IMR-90 (cell line): ENCODE measurements at regions of chr3 and their contacts with region 1.

Region 1: GRCh38 chr3:129627429-129628168 is 21.1 kb upstream of the PLXND1 start:
- DNase-seq: peak; percentile 75
- ATAC-seq: peak; percentile 29
- H3K4me3 ChIP-seq: peak overlapping the region; percentile 29
- H3K27ac ChIP-seq: peak overlapping the region; percentile 88
- H3K4me1 ChIP-seq: peaks cover 20% of the 10 kb centered on the region
- H3K27me3 ChIP-seq: no peaks in the 10 kb centered on the region
- CTCF ChIP-seq: peak; percentile 74
- POLR2A ChIP-seq: peak; percentile 46
- RAD21 ChIP-seq: peak; percentile 89

Region 2: GRCh38 chr3:129160891-129161859 is 466.4 kb before region 1 on chr3 and contains the start of gene ISY1:
- CTCF ChIA-PET with region 1: no interaction called
- POLR2A ChIA-PET with region 1: no interaction called
- dilution Hi-C with region 1: no loop called
- in situ Hi-C with region 1: no loop called
- intact Hi-C with region 1: no loop called
- DNase-seq: peak; percentile 97
- ATAC-seq: peak; percentile 87
- H3K4me3 ChIP-seq: peak within 1 kb of the TSS; percentile 67
- H3K27ac ChIP-seq: peak within 1 kb of the TSS; percentile 92
- H3K4me1 ChIP-seq: peaks cover 2% of the 10 kb centered on the region
- H3K27me3 ChIP-seq: no peaks in the 10 kb centered on the region
- CTCF ChIP-seq: peak; percentile 87
- POLR2A ChIP-seq: peak; percentile 95
- RAD21 ChIP-seq: peak; percentile 56
- total RNA-seq, gene ISY1: 28.5 and 39.7 TPM in 2 replicates

Region 3: DNA sequence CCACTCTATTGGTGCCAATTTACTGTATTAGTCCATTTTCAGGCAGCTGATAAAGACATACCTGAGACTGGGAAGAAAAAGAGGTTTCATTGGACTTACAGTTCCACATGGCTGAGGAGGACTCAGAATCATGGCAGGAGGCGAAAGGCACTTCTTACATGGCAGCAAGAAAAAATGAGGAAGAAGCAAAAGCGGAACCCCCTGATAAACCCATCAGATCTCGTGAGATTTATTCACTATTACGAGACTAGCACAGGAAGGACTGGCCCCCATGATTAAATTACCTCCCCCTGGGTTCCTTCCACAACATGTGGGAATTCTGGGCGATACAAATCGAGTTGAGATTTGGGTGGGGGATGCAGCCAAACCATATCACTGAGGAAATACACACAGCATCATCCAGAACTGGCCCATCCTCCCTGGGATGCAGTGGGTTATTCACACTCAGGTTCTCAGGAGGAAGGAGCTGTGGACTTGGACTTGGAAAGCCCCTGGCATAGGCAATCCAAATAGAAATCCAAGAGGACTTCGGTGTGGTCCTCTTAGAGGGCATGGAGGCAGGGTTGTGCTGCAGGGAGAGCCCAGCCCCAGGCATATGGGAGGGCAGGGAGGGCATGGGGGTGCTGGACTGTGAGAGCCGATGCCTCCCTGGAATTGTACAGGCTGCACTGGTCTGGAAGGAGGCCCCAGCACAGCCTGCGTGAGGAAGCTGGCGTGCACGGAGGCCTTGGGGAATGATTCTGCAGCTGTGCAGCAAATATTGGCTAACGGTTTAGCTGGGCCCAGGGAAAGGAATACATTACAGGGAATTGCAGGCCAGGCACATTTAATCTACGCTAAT is 262.1 kb before region 1 on chr3:
- CTCF ChIA-PET with region 1: no interaction called
- POLR2A ChIA-PET with region 1: no interaction called
- dilution Hi-C with region 1: no loop called
- in situ Hi-C with region 1: no loop called
- intact Hi-C with region 1: no loop called
- DNase-seq: no peak
- ATAC-seq: peak; percentile 29
- H3K4me3 ChIP-seq: no peak overlapping the region
- H3K27ac ChIP-seq: no peak overlapping the region
- H3K4me1 ChIP-seq: no peaks in the 10 kb centered on the region
- H3K27me3 ChIP-seq: peaks cover 19% of the 10 kb centered on the region
- CTCF ChIP-seq: no peak
- POLR2A ChIP-seq: no peak
- RAD21 ChIP-seq: no peak

Region 4: GRCh38 chr3:129934234-129935123 is 306.9 kb after region 1 on chr3:
- CTCF ChIA-PET with region 1: no interaction called
- POLR2A ChIA-PET with region 1: no interaction called
- dilution Hi-C with region 1: no loop called
- in situ Hi-C with region 1: no loop called
- intact Hi-C with region 1: loop called (anchors 1 kb)
- DNase-seq: peak; percentile 16
- ATAC-seq: peak; percentile 89
- H3K4me3 ChIP-seq: no peak overlapping the region; the same call in 1 of the 2 replicates
- H3K27ac ChIP-seq: no peak overlapping the region
- H3K4me1 ChIP-seq: 0 out of 2 replicates have a peak, but pooled peaks cover 2% of the 10 kb centered on the region
- H3K27me3 ChIP-seq: peaks cover 21% of the 10 kb centered on the region
- CTCF ChIP-seq: peak; percentile 83
- POLR2A ChIP-seq: no peak
- RAD21 ChIP-seq: peak; percentile 77

Region 5: GRCh38 chr3:130014526-130014925 is 386.9 kb after region 1 on chr3:
- CTCF ChIA-PET with region 1: no interaction called
- POLR2A ChIA-PET with region 1: no interaction called
- dilution Hi-C with region 1: no loop called
- in situ Hi-C with region 1: no loop called
- intact Hi-C with region 1: loop called (anchors 10 kb)
- DNase-seq: peak; percentile 48
- ATAC-seq: no peak
- H3K4me3 ChIP-seq: no peak overlapping the region
- H3K27ac ChIP-seq: no peak overlapping the region
- H3K4me1 ChIP-seq: no peaks in the 10 kb centered on the region
- H3K27me3 ChIP-seq: peaks cover 7% of the 10 kb centered on the region
- CTCF ChIP-seq: no peak
- POLR2A ChIP-seq: no peak
- RAD21 ChIP-seq: no peak

Region 6: DNA sequence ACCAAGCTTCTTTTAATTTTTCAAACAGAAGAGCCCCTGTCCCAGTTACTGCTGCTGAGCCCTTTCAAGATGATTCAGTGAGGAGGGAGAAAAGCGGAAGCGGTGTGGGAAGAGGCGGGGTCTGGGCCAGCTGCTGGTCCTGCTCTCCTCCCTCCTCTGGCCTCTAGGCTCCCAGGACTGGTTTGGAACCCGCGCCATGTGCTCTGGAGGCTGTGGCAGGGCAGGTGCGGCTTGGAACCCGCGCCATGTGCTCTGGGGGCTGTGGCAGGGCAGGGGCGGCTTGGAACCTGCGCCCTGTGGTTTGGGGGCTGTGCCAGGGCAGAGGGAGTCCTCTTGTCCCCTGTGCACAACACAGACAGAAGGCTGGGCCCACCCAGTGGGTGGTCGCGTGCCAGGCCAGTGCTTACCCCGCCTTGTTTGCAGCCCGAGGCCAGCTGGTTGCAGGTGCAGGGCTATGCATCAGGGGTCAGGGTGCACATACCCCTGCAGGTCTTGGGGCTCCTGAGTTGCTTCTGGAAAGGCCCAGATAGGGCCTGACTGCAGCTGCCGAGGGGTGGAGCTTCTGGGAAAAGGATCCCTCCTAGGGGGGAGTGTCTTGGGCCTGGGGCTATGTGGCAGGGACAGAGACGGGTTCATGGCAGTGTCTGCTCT is 466.3 kb after region 1 on chr3:
- CTCF ChIA-PET with region 1: no interaction called
- POLR2A ChIA-PET with region 1: interaction called, 4 read pairs
- dilution Hi-C with region 1: no loop called
- in situ Hi-C with region 1: loop called (anchors 25 kb)
- intact Hi-C with region 1: no loop called
- DNase-seq: no peak
- ATAC-seq: no peak
- H3K4me3 ChIP-seq: no peak overlapping the region
- H3K27ac ChIP-seq: no peak overlapping the region
- H3K4me1 ChIP-seq: no peaks in the 10 kb centered on the region
- H3K27me3 ChIP-seq: no peaks in the 10 kb centered on the region
- CTCF ChIP-seq: no peak
- POLR2A ChIP-seq: no peak
- RAD21 ChIP-seq: no peak